ENCODE measurements at regions of chr16 and their contacts with region 1.

Region 1: DNA sequence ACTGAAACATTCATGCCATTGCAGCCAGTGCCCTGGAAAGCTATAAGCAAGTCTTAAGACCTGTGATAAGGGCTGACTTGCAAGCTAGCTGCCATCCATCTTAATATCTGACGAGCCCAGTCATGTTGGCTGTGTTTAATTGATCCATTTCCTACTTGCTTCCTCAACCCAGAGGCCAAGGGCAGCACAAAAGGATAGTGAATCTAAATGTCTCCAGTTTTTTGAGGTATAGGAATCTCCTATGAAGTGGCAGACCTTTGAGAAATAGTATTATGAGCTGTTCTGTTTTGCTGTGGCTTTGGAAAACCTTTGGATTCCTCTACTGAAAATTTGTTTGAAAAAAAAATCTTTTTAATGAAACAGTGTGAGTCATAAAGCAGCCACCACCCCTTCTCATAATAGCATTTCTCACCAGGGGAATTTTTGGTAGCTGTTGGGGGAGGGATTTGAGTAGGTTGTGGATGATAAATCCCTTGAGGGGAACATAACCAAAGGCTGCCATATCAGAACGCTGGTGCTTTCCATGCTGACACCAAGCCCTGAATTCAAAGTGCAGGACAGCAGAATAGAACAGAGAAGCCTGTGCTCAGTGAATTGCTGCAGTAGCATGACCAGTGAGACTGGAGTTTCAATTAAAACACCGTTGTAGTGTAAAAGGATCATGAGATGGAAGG is 12.9 kb downstream of the ZNRF1 start:
- DNase-seq: peak; percentile 86
- H3K4me3 Mint-ChIP-seq: peak overlapping the region; percentile 62
- H3K27ac Mint-ChIP-seq: peak overlapping the region; percentile 95
- H3K4me1 Mint-ChIP-seq: peaks cover 48% of the 10 kb centered on the region
- H3K27me3 Mint-ChIP-seq: no peaks in the 10 kb centered on the region

Region 2: DNA sequence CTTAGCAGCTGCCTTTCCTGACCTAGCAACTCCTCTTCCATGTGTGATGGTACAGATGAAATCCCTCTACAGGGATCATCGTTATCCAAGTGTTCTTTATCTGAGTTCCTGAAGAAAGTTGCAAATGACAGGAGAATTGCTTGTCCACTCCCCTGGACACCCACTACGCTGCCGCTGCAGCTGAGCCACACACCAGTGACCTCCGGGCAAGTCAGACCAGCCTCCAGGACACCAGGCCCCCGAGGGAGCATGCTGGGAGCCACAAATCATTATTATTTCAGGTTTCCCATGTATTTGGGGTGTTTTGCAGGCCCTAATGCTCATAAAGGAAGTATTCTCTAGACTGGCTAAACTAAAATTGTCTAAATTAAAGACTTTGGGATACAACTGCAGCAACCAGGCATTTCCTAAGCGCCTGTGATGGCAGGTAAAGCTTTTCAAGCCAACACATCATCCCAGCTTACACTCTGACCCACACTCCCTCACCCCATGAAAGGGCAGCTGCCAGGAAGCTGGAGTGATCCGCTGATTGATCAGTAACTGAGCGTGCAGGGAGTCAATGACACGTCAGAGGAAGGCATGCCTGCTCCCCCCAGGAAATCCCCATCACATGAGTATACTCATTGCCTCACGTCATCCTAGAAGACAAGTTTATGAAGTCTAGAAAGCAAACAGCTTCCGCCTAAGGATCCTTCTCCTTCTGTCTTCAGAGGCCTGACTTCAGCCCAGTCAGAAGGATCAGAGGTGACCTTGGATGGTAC is 251.6 kb before region 1 on chr16:
- CTCF ChIA-PET with region 1: no interaction called
- intact Hi-C with region 1: no loop called
- DNase-seq: peak; percentile 63
- H3K4me3 Mint-ChIP-seq: no peak overlapping the region
- H3K27ac Mint-ChIP-seq: no peak overlapping the region
- H3K4me1 Mint-ChIP-seq: no peaks in the 10 kb centered on the region
- H3K27me3 Mint-ChIP-seq: peaks cover 3% of the 10 kb centered on the region

Region 3: DNA sequence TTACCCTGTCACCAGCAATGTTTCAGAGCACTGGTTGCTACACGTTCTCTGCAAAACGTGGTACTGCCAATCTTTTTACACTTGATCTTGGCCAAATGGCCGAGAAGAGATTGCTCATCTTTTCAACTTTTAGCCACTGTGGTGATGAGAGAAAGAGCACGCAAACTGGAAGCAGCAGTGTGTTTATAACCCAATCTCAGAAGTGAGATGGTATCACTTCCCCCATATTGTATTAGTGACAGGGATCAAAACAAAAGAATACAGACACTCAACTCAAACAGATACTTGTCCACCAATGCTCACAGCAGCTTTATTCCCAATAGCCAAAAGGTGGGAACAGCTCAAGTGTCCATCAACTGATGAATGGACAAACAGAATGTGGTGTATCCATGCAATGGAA is 165.1 kb before region 1 on chr16:
- CTCF ChIA-PET with region 1: no interaction called
- intact Hi-C with region 1: no loop called
- DNase-seq: no peak
- H3K4me3 Mint-ChIP-seq: no peak overlapping the region
- H3K27ac Mint-ChIP-seq: no peak overlapping the region
- H3K4me1 Mint-ChIP-seq: no peaks in the 10 kb centered on the region
- H3K27me3 Mint-ChIP-seq: no peaks in the 10 kb centered on the region

Region 4: DNA sequence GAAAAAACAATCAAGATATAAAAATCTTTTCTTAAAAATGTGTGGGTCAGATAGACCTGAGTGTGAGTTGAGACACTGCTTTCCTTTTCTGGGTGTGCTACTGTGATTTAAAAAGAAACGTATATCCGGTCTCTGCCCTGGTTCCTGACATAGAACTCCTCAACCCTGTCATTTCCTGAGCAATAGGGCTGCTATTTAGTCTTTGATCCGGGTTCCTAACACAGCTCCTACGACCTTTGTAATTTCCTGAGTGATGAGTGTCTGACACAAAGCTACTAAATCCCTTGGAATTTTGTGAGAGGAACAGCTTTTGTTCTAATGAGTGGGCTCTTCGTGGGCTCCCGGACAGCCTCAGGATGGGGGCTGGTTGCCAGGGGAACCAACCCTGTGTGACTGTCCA is 143.3 kb before region 1 on chr16:
- CTCF ChIA-PET with region 1: no interaction called
- intact Hi-C with region 1: loop called (anchors 1 kb)
- DNase-seq: peak; percentile 24
- H3K4me3 Mint-ChIP-seq: peak overlapping the region; percentile 25
- H3K27ac Mint-ChIP-seq: peak overlapping the region; percentile 88
- H3K4me1 Mint-ChIP-seq: peaks cover 25% of the 10 kb centered on the region
- H3K27me3 Mint-ChIP-seq: no peaks in the 10 kb centered on the region

Region 5: DNA sequence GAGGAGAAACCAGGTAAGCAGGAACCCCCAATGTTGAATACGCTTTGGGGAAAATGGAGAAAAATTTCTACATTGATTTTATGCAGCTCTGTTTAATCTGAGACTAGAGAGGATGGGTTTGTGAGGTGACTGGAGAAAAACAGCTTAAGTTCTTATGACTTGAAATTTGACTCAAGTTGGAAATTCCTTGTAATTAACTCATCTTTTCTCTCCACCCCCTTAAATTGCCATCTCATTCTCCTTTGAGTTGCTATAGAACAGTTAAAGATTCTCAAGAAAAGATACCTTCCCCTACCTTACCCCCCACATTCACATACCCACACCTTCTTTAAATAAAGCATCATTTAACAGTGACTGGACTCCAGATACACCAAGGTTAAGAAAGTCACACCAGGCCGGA is 11.2 kb after region 1 on chr16:
- CTCF ChIA-PET with region 1: interaction called, 3 read pairs
- intact Hi-C with region 1: loop called (anchors 1 kb)
- DNase-seq: no peak
- H3K4me3 Mint-ChIP-seq: no peak overlapping the region
- H3K27ac Mint-ChIP-seq: peak overlapping the region; percentile 67
- H3K4me1 Mint-ChIP-seq: peaks cover 28% of the 10 kb centered on the region
- H3K27me3 Mint-ChIP-seq: no peaks in the 10 kb centered on the region

Region 6: DNA sequence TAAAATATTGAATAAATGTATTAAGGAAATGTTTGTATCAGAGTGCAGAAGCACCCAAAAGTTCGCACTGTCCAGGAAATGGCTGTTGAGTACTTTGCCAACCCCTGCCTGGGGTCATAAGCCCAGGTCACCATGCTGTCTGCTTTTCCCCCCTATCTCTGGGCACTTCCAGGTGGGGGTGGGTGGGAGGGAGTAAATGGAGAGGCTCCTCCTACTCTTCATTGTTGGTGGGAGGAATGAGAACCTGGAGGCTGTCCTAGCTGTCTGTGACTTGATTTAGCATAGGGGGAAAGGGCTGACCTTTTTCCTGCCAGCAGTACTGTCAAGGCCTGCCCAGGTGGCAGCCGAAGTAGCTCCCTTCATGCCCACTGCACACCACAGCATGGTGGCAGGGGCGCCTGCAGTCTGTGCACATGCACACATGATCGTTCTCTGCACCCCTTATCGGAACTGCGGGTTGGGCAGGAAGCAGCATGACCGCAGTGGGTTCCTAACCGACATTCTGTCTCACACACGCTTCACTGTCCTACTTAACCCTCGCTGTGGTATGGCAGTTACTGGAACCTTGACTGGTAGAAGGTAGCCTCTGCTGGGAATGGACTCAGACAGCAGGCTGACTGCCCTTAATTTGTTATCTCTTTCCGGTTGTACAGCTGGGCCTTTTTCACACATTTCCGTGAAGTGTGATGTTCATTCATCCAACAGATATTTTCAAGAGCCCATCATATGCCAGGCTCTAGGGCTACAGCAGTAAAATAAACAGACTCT is 63.3 kb after region 1 on chr16:
- CTCF ChIA-PET with region 1: interaction called, 4 read pairs
- intact Hi-C with region 1: loop called (anchors 1 kb)
- DNase-seq: peak; percentile 93
- H3K4me3 Mint-ChIP-seq: peak overlapping the region; percentile 34
- H3K27ac Mint-ChIP-seq: peak overlapping the region; percentile 85
- H3K4me1 Mint-ChIP-seq: peaks cover 40% of the 10 kb centered on the region
- H3K27me3 Mint-ChIP-seq: no peaks in the 10 kb centered on the region

Region 7: DNA sequence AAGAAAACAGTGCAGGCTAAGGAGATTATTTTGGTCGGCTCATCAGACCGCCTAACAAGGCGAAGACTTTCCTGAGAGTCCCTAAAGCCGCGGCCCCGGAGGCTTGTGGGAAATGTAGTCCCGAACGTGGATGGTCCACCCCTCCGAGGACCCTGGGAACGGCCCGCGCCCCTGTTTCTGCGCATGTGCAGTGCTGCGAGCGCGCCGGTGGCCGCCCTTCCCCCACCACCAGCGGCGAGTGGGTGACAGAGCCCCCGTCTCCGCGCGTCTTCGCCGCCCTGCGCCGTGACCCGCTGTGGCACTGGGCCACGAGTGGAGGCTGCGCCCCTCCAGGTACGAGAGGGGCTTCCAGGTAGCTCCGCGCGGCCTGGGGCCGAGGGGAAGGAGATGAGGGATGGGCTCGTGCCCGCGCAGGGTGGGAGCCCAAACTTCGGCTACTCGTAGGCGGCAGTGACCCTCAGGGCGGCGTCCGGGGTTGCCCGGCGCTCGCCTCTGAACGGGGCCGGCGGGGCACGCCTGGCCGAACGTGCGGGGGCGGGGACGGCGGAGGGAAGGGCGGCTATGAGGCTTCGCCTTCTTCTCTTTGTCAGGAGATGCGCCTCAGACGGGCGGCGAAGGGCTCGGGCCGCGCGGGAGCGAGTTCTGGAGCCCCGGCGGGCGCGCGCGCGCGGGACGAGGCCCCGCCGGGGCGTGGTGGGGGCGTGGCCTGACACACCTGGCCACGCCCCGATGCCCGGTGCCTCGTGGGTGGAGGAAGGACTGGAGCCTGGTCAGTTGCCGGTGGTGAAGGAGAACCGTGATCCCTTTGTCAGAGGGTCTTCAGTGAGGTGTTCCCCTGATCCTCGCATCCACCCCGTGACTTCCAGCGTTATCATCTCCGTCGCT is 136.8 kb after region 1 on chr16 and contains the start of gene ZFP1:
- CTCF ChIA-PET with region 1: no interaction called
- intact Hi-C with region 1: loop called (anchors 1 kb)
- DNase-seq: peak; percentile 97
- H3K4me3 Mint-ChIP-seq: peak within 1 kb of the TSS; percentile 80
- H3K27ac Mint-ChIP-seq: peak within 1 kb of the TSS; percentile 73
- H3K4me1 Mint-ChIP-seq: peaks cover 37% of the 10 kb centered on the region
- H3K27me3 Mint-ChIP-seq: no peaks in the 10 kb centered on the region
- total RNA-seq, gene ZFP1: 20.2 to 20.9 TPM

Region 8: GRCh38 chr16:75206749-75207451 is 195.1 kb after region 1 on chr16 and contains the start of gene CTRB2:
- CTCF ChIA-PET with region 1: no interaction called
- intact Hi-C with region 1: no loop called
- DNase-seq: no peak
- H3K4me3 Mint-ChIP-seq: no peak within 1 kb of the TSS
- H3K27ac Mint-ChIP-seq: no peak within 1 kb of the TSS
- H3K4me1 Mint-ChIP-seq: no peaks in the 10 kb centered on the region
- H3K27me3 Mint-ChIP-seq: no peaks in the 10 kb centered on the region
- total RNA-seq, gene CTRB2: not detected

Region 9: GRCh38 chr16:75566040-75566810 is 554.5 kb after region 1 on chr16 and contains the start of gene GABARAPL2:
- CTCF ChIA-PET with region 1: no interaction called
- intact Hi-C with region 1: loop called (anchors 10 kb)
- DNase-seq: peak; percentile 89
- H3K4me3 Mint-ChIP-seq: peak within 1 kb of the TSS; percentile 98
- H3K27ac Mint-ChIP-seq: peak within 1 kb of the TSS; percentile 94
- H3K4me1 Mint-ChIP-seq: peaks cover 38% of the 10 kb centered on the region
- H3K27me3 Mint-ChIP-seq: peaks cover 3% of the 10 kb centered on the region
- total RNA-seq, gene GABARAPL2: 63.3 to 66.8 TPM

Measured in activated naive CD4-positive, alpha-beta T cell treated with anti-CD3 and anti-CD28 coated beads for 36 hours (primary cell).